Head of caudate nucleus (tissue), 42 donors: ENCODE measurements at regions of chr14 and their contacts with region 1.

Region 1: GRCh38 chr14:102362545-102363181 is at the starts of genes CINP and TECPR2:
- DNase-seq: peak; percentile 97 to 100 (median 99)

Region 2: DNA sequence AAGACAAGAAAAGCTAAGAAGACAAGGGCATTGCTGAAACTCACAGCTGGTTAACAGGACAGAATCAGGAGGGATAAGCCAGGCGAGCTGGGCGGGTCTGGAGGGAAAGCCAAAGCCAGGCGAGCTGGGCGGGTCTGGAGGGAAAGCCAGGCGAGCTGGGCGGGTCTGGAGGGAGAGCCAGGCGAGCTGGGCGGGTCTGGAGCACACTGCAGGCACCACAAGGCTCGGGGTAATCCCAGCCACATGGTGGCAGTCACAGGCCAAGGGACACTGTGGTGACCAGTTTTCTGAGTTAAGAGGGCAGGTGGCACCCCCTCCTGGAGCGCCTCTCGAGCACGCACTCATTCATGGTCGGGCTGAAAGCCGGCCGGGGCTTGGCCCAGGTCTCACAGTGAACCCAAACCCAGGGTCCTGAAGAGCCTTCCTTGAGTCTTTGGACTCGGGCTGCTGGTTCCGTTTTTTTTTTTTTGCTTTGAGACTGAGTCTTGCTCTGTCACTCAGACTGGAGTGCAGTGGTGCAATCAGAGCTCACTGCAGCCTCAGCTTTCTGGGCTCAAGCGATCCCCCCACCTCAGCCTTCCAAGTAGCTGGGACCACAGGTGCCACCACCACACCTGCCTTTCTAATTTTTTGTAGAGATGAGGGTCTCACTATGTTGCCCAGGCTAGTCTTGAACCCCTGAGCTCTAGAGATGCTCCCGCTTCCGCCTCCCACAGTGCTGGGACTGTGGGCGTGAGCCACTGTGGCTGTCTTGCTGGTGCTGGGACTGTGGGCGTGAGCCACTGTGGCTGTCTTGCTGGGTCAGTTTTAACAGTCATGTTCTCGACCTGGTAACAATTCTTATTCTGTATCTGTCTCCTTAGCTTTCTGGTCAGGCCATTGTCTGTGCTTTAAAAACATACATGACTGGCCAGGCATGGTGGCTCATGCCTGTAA is 316.1 kb before region 1 on chr14:
- intact Hi-C with region 1: no loop called
- DNase-seq: peak; percentile 49 to 90 (median 78)

Region 3: GRCh38 chr14:102418169-102418852 is 55.6 kb after region 1 on chr14:
- intact Hi-C with region 1: loop called (anchors 10 kb)
- DNase-seq: peak in 9 of 42 donors; percentile 26 to 66 (median 51)

Region 4: GRCh38 chr14:102509744-102510615 is 147.3 kb after region 1 on chr14 and contains the start of gene ANKRD9:
- intact Hi-C with region 1: loop called (anchors 10 kb)
- DNase-seq: peak; percentile 71 to 95 (median 88)

Region 5: GRCh38 chr14:102525219-102525928 is 162.7 kb after region 1 on chr14:
- intact Hi-C with region 1: no loop called
- DNase-seq: peak in 3 of 42 donors; percentile 15 to 54 (median 39)

Region 6: DNA sequence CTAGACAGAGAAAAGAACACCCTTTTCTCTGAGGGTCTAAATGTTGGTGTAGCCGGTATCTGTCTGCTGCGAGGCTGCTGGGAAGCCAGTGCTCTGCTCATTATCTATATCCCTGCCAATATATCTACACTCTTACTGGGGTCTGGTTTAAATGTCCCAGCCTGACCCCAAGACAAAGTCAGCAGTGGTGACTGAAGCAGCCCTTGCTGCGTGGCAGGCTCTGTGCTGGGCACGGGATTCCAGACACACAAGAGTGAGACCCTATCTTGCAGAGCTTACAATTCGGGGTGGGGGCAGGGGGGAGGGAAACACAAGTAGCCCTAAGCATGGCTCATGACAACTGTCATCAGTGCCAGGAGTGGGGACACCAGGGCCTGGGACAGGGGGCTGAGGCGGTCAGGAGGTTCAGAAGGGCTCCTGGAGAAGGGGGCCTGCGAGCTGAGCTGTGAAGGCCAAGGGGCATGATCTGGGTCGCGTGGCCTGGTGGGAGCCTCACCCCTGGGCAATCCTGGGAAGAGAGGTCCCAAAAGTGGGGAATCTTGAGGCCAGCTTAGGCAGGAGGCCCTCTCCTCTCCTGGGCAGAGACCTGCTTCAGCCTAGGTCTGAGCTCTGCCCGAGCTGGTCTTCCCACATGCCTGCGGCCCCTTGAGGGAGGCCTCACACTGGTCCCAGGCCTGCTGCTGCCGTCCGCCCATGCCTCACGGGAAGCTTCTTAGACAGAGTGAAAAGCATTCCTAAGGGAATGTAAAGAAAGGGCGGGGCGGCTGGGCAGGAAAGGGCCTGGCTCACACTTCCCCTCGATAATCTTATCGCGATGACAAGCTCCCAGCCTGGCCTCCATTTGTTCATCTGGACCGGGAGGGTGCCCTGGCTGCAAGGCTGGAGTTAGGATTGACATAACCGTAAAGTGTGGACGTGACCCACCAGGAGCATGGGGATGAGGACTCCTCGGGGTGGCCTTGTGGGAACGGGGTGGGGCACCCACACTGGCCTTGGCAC is 222.5 kb after region 1 on chr14:
- intact Hi-C with region 1: no loop called
- DNase-seq: no peak

Region 7: GRCh38 chr14:102608064-102608446 is 245.4 kb after region 1 on chr14:
- intact Hi-C with region 1: no loop called
- DNase-seq: no peak